ENCODE measurements at regions of chr2 and their contacts with region 1.

Region 1: DNA sequence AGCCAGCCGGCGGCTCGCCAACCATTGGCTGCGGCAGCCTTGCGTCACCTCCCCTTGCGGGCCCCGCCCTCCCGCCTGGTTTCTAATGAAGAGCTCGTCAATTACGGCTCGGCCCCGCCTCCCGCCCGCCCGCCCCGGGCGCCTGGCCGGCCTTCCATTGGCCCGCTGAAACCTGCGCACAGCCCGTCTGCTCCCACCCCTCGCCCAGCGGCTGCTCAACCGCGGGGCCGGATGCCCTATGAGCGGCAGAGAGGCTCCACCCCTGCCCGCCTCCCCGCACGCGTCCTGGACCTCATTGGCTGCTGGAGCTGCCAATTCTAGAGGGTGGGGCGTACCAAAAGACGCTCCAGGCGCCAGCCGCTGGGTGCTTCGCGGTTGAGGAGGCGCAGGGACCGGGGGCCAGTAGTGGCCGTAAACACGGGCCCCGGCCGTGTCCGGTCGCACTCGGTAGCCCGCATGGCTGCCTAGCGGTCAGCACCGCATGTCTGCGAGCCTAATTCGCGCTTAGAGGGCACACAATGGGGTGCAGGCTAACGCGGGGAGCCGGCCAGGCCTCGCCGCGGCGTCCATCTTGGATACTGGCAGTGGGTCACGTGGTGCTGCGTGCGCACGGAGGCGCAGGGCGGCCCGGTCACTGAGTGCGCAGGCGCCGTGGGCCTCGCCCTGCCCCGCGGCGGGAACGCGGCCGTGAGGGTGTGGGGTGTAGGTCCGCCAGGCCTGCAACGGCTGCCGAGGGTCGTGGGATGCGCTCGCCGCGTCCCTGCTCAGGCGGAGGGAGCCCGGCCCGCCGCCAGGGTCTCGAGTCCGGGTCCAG is 454 bp upstream of the HDAC4 start:
- DNase-seq: peak; percentile 98 to 100 (median 99)
- ATAC-seq: peak; percentile 86
- H3K4me3 ChIP-seq: peak overlapping the region; percentile 67
- H3K4me3 Mint-ChIP-seq: peak overlapping the region; percentile 98
- H3K27ac ChIP-seq: peak overlapping the region; percentile 97 to 99
- H3K27ac Mint-ChIP-seq: peak overlapping the region; percentile 99
- H3K4me1 ChIP-seq: peaks cover 37% of the 10 kb centered on the region
- H3K4me1 Mint-ChIP-seq: peaks cover 48% of the 10 kb centered on the region
- H3K27me3 ChIP-seq: no peaks in the 10 kb centered on the region
- H3K27me3 Mint-ChIP-seq: no peaks in the 10 kb centered on the region
- CTCF ChIP-seq: no peak

Region 2: GRCh38 chr2:239143858-239144718 is 257.2 kb before region 1 on chr2:
- CTCF ChIA-PET with region 1: no interaction called
- POLR2A ChIA-PET with region 1: interaction called, 3 read pairs
- intact Hi-C with region 1: loop called (anchors 1 to 2 kb)
- DNase-seq: peak in 9 of 14 experiments; percentile 10 to 63 (median 26)
- ATAC-seq: peak; percentile 74
- H3K4me3 ChIP-seq: no peak overlapping the region
- H3K4me3 Mint-ChIP-seq: no peak overlapping the region
- H3K27ac ChIP-seq: no peak overlapping the region
- H3K27ac Mint-ChIP-seq: no peak overlapping the region
- H3K4me1 ChIP-seq: no peaks in the 10 kb centered on the region
- H3K4me1 Mint-ChIP-seq: peaks cover 7% of the 10 kb centered on the region
- H3K27me3 ChIP-seq: no peaks in the 10 kb centered on the region
- H3K27me3 Mint-ChIP-seq: no peaks in the 10 kb centered on the region
- CTCF ChIP-seq: peak; percentile 51

Region 3: DNA sequence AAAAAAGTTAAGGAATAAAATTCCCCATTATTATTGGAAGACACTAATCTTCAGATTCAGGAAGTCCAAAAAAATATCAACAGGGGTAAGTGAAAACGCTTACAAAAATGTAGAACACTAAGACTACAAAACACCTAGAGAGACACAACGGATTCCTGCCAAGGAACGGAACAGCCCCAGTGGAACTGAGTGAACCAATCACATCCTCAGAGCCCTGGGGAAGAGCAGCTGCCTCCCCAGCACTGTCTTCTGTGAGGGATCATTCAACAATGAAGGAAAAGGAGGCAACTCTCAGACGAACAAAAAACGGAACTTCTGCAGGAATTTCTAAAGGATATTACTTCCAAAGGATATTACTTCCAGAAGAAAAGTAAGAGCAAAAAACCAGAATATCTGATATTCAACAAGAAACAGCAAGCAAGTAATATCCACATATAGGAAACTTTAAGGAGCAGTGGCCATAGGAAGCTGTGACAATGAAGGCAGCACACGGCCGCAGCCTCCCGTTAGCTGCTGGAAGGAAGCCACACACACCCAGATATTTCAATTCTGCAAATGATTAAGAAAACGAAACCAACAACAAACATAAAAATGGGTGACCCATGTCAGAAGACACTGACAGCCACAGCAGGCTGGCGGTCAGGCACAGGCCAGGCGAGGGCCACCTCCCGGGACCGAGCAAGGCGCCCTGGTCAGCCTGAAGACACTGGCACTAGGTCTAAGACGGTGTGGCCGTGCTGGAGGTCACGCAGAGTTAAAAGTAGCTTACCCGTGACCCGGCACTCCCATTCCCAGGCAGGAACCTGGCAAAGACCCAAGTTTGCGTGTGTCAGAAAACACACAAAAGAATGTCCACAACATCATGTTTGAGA is 82.2 kb before region 1 on chr2:
- CTCF ChIA-PET with region 1: no interaction called
- POLR2A ChIA-PET with region 1: interaction called, 19 read pairs
- intact Hi-C with region 1: no loop called
- DNase-seq: peak in 5 of 14 experiments; percentile 32 to 61 (median 57)
- ATAC-seq: no peak
- H3K4me3 ChIP-seq: peak overlapping the region; percentile 49
- H3K4me3 Mint-ChIP-seq: peak overlapping the region; percentile 90
- H3K27ac ChIP-seq: peak overlapping the region; percentile 37 to 61
- H3K27ac Mint-ChIP-seq: peak overlapping the region; percentile 97
- H3K4me1 ChIP-seq: peaks cover 69% of the 10 kb centered on the region
- H3K4me1 Mint-ChIP-seq: peaks cover 70% of the 10 kb centered on the region
- H3K27me3 ChIP-seq: no peaks in the 10 kb centered on the region
- H3K27me3 Mint-ChIP-seq: no peaks in the 10 kb centered on the region
- CTCF ChIP-seq: no peak

Region 4: GRCh38 chr2:239369631-239370161 is 31.6 kb before region 1 on chr2:
- CTCF ChIA-PET with region 1: interaction called, 4 read pairs
- POLR2A ChIA-PET with region 1: interaction called, 38 read pairs
- intact Hi-C with region 1: loop called in 1 of 2 experiments (anchors 1 kb)
- DNase-seq: peak; percentile 57 to 95 (median 72)
- ATAC-seq: peak; percentile 94
- H3K4me3 ChIP-seq: peak overlapping the region; percentile 43
- H3K4me3 Mint-ChIP-seq: peak overlapping the region; percentile 75
- H3K27ac ChIP-seq: peak overlapping the region; percentile 80 to 95
- H3K27ac Mint-ChIP-seq: no peak overlapping the region
- H3K4me1 ChIP-seq: peaks cover 44% of the 10 kb centered on the region
- H3K4me1 Mint-ChIP-seq: peaks cover 19% of the 10 kb centered on the region
- H3K27me3 ChIP-seq: no peaks in the 10 kb centered on the region
- H3K27me3 Mint-ChIP-seq: no peaks in the 10 kb centered on the region
- CTCF ChIP-seq: no peak

Region 5: GRCh38 chr2:239882331-239882732 is 481.1 kb after region 1 on chr2:
- CTCF ChIA-PET with region 1: no interaction called
- POLR2A ChIA-PET with region 1: no interaction called
- intact Hi-C with region 1: loop called in 1 of 2 experiments (anchors 10 kb)
- DNase-seq: peak; percentile 33 to 76 (median 58)
- ATAC-seq: peak; percentile 72
- H3K4me3 ChIP-seq: no peak overlapping the region
- H3K4me3 Mint-ChIP-seq: no peak overlapping the region
- H3K27ac ChIP-seq: no peak overlapping the region
- H3K27ac Mint-ChIP-seq: no peak overlapping the region
- H3K4me1 ChIP-seq: peaks cover 11% of the 10 kb centered on the region
- H3K4me1 Mint-ChIP-seq: peaks cover 10% of the 10 kb centered on the region
- H3K27me3 ChIP-seq: no peaks in the 10 kb centered on the region
- H3K27me3 Mint-ChIP-seq: peaks cover 4% of the 10 kb centered on the region
- CTCF ChIP-seq: peak; percentile 72

Region 6: GRCh38 chr2:240136013-240136670 is 734.9 kb after region 1 on chr2 and contains the start of gene COPS9:
- CTCF ChIA-PET with region 1: no interaction called
- POLR2A ChIA-PET with region 1: no interaction called
- intact Hi-C with region 1: loop called in 1 of 2 experiments (anchors 5 kb)
- DNase-seq: peak; percentile 80 to 93 (median 86)
- ATAC-seq: peak; percentile 94
- H3K4me3 ChIP-seq: peak within 1 kb of the TSS; percentile 94
- H3K4me3 Mint-ChIP-seq: peak within 1 kb of the TSS; percentile 95
- H3K27ac ChIP-seq: peak within 1 kb of the TSS; percentile 24 to 40
- H3K27ac Mint-ChIP-seq: peak within 1 kb of the TSS; percentile 71
- H3K4me1 ChIP-seq: peaks cover 33% of the 10 kb centered on the region
- H3K4me1 Mint-ChIP-seq: peaks cover 33% of the 10 kb centered on the region
- H3K27me3 ChIP-seq: no peaks in the 10 kb centered on the region
- H3K27me3 Mint-ChIP-seq: no peaks in the 10 kb centered on the region
- CTCF ChIP-seq: no peak
- total RNA-seq, gene COPS9: 46.7 to 48.5 TPM

Measured in CD4-positive, alpha-beta T cell (primary cell).